Activated naive CD4-positive, alpha-beta T cell treated with anti-CD3 and anti-CD28 coated beads for 36 hours (primary cell): ENCODE measurements at regions of chr17 and their contacts with region 1.

Region 1: DNA sequence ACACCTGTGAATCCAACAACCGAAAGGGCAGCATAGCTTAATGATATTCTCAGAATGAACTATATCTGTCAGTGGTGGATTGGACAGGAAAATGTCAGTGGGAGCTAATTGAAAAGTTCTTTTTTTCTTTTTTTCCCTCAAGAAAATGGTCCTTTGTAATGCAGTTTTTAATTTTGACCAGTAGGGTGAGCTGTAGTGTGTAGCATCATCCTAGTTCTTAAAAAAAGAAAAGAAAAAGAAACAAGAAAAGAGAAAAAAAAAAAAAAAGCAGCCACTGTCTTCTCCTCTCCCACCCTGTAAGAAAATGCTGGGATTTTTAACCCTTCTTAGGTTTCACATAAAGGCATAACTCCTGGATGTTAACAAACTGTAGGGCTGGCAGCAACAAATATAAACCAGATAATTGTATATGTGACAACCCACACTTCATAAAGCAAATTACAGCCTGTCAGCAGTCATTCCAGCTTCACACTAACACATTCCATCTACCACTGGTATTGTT is 78.1 kb downstream of the SKAP1 start:
- DNase-seq: no peak
- H3K4me3 Mint-ChIP-seq: no peak overlapping the region
- H3K27ac Mint-ChIP-seq: no peak overlapping the region
- H3K4me1 Mint-ChIP-seq: peaks cover 8% of the 10 kb centered on the region
- H3K27me3 Mint-ChIP-seq: no peaks in the 10 kb centered on the region

Region 2: DNA sequence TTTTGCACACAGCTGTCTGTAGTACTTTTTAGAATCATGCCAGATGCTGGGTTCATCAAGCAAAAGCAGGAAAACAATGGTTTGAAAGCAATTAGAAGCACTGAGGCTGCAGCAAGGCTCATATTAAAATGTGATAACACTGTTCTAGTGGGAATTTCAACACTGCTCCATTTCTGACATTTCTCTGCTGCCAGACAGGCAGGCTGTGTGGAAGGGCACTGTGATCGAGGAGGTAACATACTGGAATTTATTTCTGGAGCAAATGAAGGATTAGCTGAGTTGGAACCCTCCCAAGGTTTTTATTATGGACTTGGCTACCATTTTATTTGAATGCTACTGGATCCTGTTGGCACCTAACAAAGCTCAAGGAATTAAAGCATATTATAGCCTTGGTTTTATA is 11.3 kb after region 1 on chr17:
- CTCF ChIA-PET with region 1: interaction called, 22 read pairs
- intact Hi-C with region 1: no loop called
- DNase-seq: no peak
- H3K4me3 Mint-ChIP-seq: no peak overlapping the region
- H3K27ac Mint-ChIP-seq: no peak overlapping the region
- H3K4me1 Mint-ChIP-seq: peaks cover 14% of the 10 kb centered on the region
- H3K27me3 Mint-ChIP-seq: no peaks in the 10 kb centered on the region

Region 3: GRCh38 chr17:48413613-48414405 is 61.9 kb after region 1 on chr17:
- CTCF ChIA-PET with region 1: interaction called, 11 read pairs
- intact Hi-C with region 1: no loop called
- DNase-seq: no peak
- H3K4me3 Mint-ChIP-seq: peak overlapping the region; percentile 10
- H3K27ac Mint-ChIP-seq: peak overlapping the region; percentile 81
- H3K4me1 Mint-ChIP-seq: peaks cover 89% of the 10 kb centered on the region
- H3K27me3 Mint-ChIP-seq: no peaks in the 10 kb centered on the region

Region 4: GRCh38 chr17:48492401-48493298 is 140.8 kb after region 1 on chr17:
- CTCF ChIA-PET with region 1: interaction called, 16 read pairs
- intact Hi-C with region 1: no loop called
- DNase-seq: peak; percentile 74
- H3K4me3 Mint-ChIP-seq: peak overlapping the region; percentile 45
- H3K27ac Mint-ChIP-seq: no peak overlapping the region
- H3K4me1 Mint-ChIP-seq: peaks cover 19% of the 10 kb centered on the region
- H3K27me3 Mint-ChIP-seq: peaks cover 13% of the 10 kb centered on the region